ENCODE measurements at regions of chr5 and their contacts with region 1.

Region 1: DNA sequence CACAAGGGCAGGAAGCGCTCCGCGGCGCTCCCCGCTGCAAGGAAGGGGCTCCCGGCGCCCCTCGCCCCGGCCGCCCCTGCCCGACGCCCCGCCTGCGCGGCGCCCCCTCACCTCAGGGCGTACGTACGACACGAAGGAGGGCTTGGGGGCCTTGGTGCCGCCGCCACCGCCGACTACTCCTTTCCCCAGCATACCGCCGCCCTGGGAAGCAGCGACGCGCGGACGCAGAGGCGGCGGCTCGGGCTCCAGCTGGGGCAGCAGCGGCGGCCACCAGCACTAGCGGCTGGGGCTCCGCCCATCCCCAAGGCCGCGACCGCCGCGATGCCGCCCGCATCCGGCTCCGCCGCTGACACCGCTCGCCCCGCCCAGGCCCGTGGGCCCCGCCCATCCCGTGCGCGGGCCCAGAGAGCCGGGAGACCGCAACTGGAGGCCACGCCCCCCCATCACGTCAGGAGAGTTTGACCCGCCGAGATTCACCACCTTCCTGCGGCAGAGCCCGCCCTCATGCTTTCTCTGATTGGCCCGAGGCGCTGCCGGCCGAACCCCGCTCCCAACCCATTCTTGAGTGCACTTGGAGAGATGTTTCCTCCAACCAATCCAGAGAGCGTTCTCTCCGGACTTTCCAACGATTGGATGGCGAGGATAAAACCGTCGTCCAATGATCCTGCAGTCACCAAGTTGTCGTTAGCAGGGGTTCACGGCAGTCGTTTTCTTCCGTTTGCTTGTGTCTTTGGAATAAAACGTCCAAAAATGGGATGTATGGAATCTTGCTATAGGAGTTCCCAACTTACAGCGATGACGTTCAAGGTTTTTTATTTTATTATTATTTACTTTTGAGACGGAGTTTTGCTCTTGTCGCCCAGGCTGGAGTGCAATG is at the start of gene MTMR12:
- H3K4me3 ChIP-seq: peak within 1 kb of the TSS; percentile 94
- H3K27ac ChIP-seq: peak within 1 kb of the TSS; percentile 80
- H3K4me1 ChIP-seq: peaks cover 8% of the 10 kb centered on the region; the same call in 1 of the 2 replicates
- CTCF ChIP-seq: 0 out of 2 replicates have a peak, but pooled peaks have one; percentile 5

Region 2: DNA sequence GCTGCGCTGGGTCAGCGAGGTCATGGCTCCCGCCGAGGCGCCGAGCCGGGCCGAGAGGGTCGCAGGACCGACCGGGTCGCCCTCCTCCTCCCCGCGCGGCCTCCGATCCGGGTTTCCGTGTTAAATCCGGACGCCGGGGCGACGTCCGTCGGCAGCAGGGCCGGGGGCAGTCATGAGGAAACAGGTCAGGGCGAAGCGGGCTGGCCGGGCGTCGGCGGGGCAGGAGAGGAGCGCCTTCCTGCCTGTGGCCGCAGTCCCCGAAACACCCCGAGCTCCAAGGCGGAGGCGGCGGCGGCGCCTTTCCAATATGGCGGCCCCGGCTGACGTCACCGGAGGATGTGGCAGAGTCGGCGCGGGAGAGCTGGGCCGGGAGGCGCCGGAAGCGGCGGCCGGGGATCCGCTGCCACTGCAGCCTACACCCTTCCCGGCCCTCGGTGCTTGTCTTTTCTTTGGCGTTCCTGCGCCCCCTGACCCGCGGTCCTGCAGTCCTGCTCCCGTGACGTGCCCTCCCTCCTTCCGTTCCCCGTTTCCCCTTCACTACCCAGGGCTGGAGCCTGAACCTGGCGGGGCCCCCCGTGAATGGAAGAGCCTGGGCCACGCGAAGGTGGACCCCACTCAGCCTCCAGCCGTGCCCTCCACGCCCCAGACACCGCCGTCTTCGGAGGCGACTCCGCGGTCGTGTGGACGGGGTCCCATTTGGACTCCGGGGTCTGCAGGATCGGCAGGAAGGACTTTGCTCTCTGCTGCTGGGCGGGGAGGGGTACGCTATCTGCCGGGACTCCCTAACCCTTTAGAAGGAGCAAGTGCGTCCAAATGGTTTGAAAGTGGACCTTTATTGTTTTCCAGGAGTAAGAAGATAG is 138.6 kb before region 1 on chr5 and contains the start of gene GOLPH3:
- CTCF ChIA-PET with region 1: no interaction called
- POLR2A ChIA-PET with region 1: interaction called, 11 read pairs
- H3K4me3 ChIP-seq: peak within 1 kb of the TSS; percentile 93
- H3K27ac ChIP-seq: peak within 1 kb of the TSS; percentile 100
- H3K4me1 ChIP-seq: peaks cover 16% of the 10 kb centered on the region
- CTCF ChIP-seq: peak; percentile 89; the same call in 1 of the 2 replicates